K562 (cell line): ENCODE measurements at regions of chr5 and their contacts with region 1.

Region 1: DNA sequence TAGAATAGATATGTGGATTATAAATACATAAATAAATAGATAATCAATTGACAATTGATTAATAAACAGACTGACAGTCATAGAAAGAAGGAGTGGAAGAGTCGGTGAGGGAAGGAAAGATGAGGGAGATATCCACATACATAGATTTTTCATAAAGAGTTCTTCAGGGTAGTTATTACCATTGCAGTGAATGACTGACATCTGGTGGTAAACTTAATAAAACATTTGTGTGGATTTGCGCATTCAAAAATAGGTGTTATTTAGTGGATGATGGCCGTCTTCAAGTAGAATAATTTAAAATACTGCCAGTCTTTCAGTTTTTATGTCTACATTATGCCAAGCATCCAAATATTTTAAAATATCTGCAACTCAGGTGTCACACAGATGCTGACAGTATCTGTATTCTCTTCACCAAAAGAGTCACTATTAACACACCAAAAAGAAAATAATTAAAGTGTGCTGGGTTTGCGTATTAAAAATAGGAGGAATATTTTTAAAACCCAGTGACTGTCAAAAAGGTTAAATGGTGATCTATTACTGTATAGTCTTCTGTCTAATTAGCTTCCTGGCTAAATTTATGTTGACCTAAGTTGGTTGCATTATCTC is 78.8 kb downstream of the GIN1 start:
- DNase-seq: peak in 1 of 4 experiments; percentile 25
- ATAC-seq: no peak
- H3K4me3 ChIP-seq: no peak overlapping the region
- H3K27ac ChIP-seq: no peak overlapping the region
- H3K4me1 ChIP-seq: no peaks in the 10 kb centered on the region
- H3K27me3 ChIP-seq: no peaks in the 10 kb centered on the region
- CTCF ChIP-seq: peak in 2 of 3 experiments; percentile 2 to 43; a peak in 3 of 6 replicates
- EP300 ChIP-seq: no peak
- POLR2A ChIP-seq: no peak
- RAD21 ChIP-seq: peak; percentile 73 to 84

Region 2: DNA sequence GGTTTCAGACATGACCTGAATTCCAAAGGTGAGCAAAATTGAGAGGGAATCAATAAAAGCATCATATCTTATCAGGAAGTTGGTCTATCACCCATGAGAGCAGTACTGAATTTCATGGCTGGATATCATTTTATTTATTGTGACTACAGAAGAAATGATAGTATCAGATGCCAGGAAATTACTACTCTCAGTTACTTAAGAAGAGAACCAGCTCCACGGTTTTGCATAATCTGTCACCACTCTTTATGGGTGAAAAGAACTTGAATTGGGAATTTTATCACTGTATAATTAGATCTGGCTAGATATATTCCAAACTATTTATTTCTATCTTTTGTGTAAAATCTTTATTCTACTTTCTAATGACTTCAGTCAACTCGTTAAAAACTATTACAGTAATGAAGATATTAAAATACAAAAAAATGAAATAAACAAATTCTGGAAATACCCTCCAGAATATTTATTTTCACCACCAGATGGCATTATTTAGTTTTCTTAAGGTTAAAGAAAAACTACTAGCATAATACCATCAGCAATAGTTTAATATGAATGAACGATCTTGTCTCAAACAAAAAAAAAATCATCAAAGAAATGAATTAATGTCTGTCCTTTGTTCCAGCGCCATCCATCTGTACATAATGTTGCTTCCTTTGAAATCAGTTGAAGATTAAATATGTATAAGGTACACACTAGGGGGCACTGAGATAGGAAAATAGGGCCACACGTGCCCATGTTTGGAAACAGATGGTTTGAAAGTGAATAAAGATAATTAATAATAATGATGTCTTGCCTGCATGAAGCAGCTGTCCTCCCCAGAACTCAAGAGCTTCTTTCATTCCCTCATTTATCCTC is 457.7 kb before region 1 on chr5:
- CTCF ChIA-PET with region 1: interaction called, 3 read pairs
- POLR2A ChIA-PET with region 1: no interaction called
- in situ Hi-C with region 1: no loop called
- intact Hi-C with region 1: loop called (anchors 5 kb)
- DNase-seq: peak in 3 of 4 experiments; percentile 2 to 9 (median 7)
- ATAC-seq: no peak
- H3K4me3 ChIP-seq: no peak overlapping the region
- H3K27ac ChIP-seq: no peak overlapping the region
- H3K4me1 ChIP-seq: no peaks in the 10 kb centered on the region
- H3K27me3 ChIP-seq: no peaks in the 10 kb centered on the region
- CTCF ChIP-seq: peak; percentile 21 to 48 (median 48); a peak in 3 of 6 replicates
- EP300 ChIP-seq: no peak
- POLR2A ChIP-seq: no peak
- RAD21 ChIP-seq: peak; percentile 48 to 61

Region 3: DNA sequence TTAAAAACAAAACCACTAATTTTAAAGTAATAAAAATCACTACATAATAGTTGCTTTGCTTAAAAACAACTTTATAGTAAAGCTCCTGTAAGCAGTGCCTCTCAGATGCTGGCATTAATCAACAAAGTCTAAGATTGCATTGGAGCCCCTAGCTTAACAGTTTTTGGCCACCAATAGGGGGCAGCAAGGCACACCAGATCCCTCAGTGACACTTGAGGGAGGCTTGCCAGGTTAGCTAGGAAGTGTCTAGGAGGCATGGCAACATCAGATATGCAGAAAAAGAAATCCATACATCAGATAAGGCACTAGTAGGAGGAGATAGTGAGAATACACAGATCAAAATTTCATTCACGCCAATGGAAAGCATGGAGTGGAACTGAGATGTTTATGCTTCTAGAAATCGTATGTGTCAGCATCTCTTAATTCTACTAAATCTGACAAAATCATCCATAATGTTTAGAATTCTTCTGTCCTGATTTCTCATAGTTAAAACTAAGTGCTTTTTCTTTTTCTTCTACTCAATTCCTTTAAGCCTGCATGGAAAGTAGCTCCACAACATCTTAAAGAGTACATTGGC is 359.7 kb before region 1 on chr5:
- CTCF ChIA-PET with region 1: interaction called, 5 read pairs
- POLR2A ChIA-PET with region 1: no interaction called
- in situ Hi-C with region 1: no loop called
- intact Hi-C with region 1: loop called (anchors 5 kb)
- DNase-seq: peak; percentile 17 to 67 (median 37)
- ATAC-seq: peak; percentile 91
- H3K4me3 ChIP-seq: no peak overlapping the region
- H3K27ac ChIP-seq: no peak overlapping the region
- H3K4me1 ChIP-seq: no peaks in the 10 kb centered on the region
- H3K27me3 ChIP-seq: no peaks in the 10 kb centered on the region
- CTCF ChIP-seq: peak; percentile 61 to 74 (median 72)
- EP300 ChIP-seq: no peak
- POLR2A ChIP-seq: no peak
- RAD21 ChIP-seq: peak; percentile 63 to 72

Region 4: DNA sequence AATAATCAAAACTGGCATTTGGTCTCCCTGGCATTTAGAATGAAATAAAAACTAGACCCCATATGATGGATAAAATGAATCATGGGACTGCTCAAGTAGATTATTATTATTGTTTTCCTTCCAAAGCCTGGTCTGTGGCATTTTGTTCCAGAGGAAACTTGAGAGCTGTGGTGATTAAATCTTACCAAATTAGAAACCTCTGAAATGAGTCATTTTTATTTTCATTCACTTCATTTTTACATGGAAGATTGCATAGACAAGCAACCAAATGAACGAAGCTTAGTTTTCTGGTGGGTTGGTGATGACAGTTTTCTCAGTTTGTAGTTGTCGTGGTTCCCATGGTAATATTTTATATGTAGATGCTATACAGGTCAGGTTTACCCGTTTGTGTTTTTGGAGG is 262.7 kb before region 1 on chr5:
- CTCF ChIA-PET with region 1: no interaction called
- POLR2A ChIA-PET with region 1: no interaction called
- in situ Hi-C with region 1: no loop called
- intact Hi-C with region 1: loop called (anchors 5 kb)
- DNase-seq: no peak
- ATAC-seq: no peak
- H3K4me3 ChIP-seq: no peak overlapping the region
- H3K27ac ChIP-seq: no peak overlapping the region
- H3K4me1 ChIP-seq: no peaks in the 10 kb centered on the region
- H3K27me3 ChIP-seq: no peaks in the 10 kb centered on the region
- CTCF ChIP-seq: no peak
- EP300 ChIP-seq: no peak
- POLR2A ChIP-seq: no peak
- RAD21 ChIP-seq: no peak

Region 5: GRCh38 chr5:102875721-102876123 is 165.5 kb before region 1 on chr5:
- CTCF ChIA-PET with region 1: no interaction called
- POLR2A ChIA-PET with region 1: no interaction called
- in situ Hi-C with region 1: no loop called
- intact Hi-C with region 1: no loop called
- DNase-seq: no peak
- ATAC-seq: no peak
- H3K4me3 ChIP-seq: no peak overlapping the region
- H3K27ac ChIP-seq: no peak overlapping the region
- H3K4me1 ChIP-seq: no peaks in the 10 kb centered on the region
- H3K27me3 ChIP-seq: no peaks in the 10 kb centered on the region
- CTCF ChIP-seq: no peak
- EP300 ChIP-seq: no peak
- POLR2A ChIP-seq: no peak
- RAD21 ChIP-seq: no peak

Region 6: DNA sequence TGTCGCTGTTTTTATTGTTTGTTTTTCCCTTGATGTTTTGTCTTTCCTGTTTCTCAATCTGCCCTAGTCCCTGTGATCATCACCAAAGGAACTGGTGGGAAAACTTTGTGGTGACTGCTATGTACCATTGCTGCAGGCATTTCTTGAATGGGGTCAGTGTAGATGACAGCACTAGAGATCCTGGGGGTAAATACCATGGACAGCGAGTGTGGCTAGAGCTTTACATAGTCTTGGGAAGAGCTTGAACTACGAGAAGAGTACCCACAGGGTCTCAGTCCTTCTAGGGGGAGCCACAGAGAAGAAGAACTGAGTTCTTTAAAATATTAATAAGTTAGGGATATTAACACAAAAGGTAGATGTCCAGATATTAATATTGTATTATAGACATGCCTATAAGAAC is 147.2 kb before region 1 on chr5:
- CTCF ChIA-PET with region 1: no interaction called
- POLR2A ChIA-PET with region 1: no interaction called
- in situ Hi-C with region 1: no loop called
- intact Hi-C with region 1: no loop called
- DNase-seq: no peak
- ATAC-seq: no peak
- H3K4me3 ChIP-seq: no peak overlapping the region
- H3K27ac ChIP-seq: no peak overlapping the region
- H3K4me1 ChIP-seq: no peaks in the 10 kb centered on the region
- H3K27me3 ChIP-seq: no peaks in the 10 kb centered on the region
- CTCF ChIP-seq: no peak
- EP300 ChIP-seq: no peak
- POLR2A ChIP-seq: no peak
- RAD21 ChIP-seq: no peak

Region 7: DNA sequence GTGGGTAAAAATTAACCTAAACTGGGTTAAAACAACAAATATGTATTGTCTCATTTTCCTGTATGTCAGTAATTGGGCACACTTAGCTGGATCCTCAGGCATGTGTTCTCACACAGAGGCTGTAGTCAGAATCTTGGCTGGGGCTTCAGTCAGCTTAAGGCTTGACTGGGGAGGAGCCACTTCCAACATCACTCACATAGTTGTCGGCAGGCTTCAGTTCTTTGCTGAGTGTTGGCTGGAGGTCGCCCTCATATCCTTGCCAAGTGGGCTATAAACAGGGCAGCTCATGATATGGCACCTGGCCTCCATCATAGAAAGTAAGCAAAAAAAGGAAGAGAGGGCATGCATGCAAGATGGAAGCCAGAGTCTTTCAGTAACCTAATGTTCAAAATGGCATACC is 94.2 kb before region 1 on chr5:
- CTCF ChIA-PET with region 1: no interaction called
- POLR2A ChIA-PET with region 1: no interaction called
- in situ Hi-C with region 1: no loop called
- intact Hi-C with region 1: no loop called
- DNase-seq: no peak
- ATAC-seq: no peak
- H3K4me3 ChIP-seq: no peak overlapping the region
- H3K27ac ChIP-seq: no peak overlapping the region
- H3K4me1 ChIP-seq: no peaks in the 10 kb centered on the region
- H3K27me3 ChIP-seq: no peaks in the 10 kb centered on the region
- CTCF ChIP-seq: no peak
- EP300 ChIP-seq: no peak
- POLR2A ChIP-seq: no peak
- RAD21 ChIP-seq: no peak

Region 8: DNA sequence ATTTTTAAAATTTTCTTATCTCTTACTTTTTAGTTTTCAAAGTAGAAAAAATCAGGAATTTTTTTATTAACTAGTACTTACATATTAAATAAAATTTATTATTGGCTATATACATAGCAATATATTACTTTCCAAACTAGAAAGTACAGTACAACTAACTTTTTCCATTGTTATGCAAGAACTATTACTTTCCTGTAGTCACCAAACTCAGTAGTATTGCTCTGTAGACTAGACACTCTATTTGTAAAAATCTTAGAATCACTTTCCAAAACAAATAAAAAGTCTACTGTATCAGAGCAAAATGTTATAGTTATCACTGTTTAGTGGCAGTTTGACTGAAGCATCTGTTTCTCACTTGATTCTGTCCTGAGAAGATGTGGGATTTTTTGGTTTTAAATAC is 162.1 kb after region 1 on chr5:
- CTCF ChIA-PET with region 1: no interaction called
- POLR2A ChIA-PET with region 1: no interaction called
- in situ Hi-C with region 1: no loop called
- intact Hi-C with region 1: no loop called
- DNase-seq: no peak
- ATAC-seq: no peak
- H3K4me3 ChIP-seq: no peak overlapping the region
- H3K27ac ChIP-seq: no peak overlapping the region
- H3K4me1 ChIP-seq: no peaks in the 10 kb centered on the region
- H3K27me3 ChIP-seq: no peaks in the 10 kb centered on the region
- CTCF ChIP-seq: no peak
- EP300 ChIP-seq: no peak
- POLR2A ChIP-seq: no peak
- RAD21 ChIP-seq: no peak